Activated CD4-positive, alpha-beta T cell treated with anti-CD3 and anti-CD28 coated beads, Interleukin-2, amount 10 ng/mL, durations not matched to agents 7 days and 5 days (primary cell): ENCODE measurements at regions of chr12 and their contacts with region 1.

Region 1: DNA sequence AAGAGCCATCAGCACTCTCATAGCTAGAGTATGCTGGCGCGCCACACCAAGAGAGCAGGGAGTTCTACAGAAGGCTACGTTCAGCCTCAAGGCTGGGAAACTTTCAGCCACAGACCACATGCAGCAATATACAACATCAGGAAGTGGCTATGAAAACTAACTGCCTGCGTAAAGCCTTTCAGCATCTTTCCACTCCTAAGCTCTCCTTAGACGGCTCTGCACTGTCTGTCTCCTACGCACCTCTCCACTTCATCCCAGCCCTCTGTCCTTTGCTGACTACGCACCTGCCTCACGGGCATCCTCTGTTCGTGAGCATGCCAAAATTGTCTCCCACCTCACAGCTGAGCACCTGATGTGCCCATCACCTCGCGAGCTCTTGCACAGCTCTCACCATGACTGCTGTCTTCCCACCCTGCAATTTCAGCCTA is 9.7 kb downstream of the MPHOSPH9 start:
- DNase-seq: peak; percentile 74
- H3K4me3 Mint-ChIP-seq: peak overlapping the region; percentile 64
- H3K27ac Mint-ChIP-seq: peak overlapping the region; percentile 96
- H3K4me1 Mint-ChIP-seq: peaks cover 49% of the 10 kb centered on the region
- H3K27me3 Mint-ChIP-seq: no peaks in the 10 kb centered on the region

Region 2: GRCh38 chr12:122569288-122569687 is 654.0 kb before region 1 on chr12:
- CTCF ChIA-PET with region 1: no interaction called
- POLR2A ChIA-PET with region 1: interaction called, 14 read pairs
- DNase-seq: no peak
- H3K4me3 Mint-ChIP-seq: no peak overlapping the region
- H3K27ac Mint-ChIP-seq: no peak overlapping the region
- H3K4me1 Mint-ChIP-seq: no peaks in the 10 kb centered on the region
- H3K27me3 Mint-ChIP-seq: no peaks in the 10 kb centered on the region

Region 3: DNA sequence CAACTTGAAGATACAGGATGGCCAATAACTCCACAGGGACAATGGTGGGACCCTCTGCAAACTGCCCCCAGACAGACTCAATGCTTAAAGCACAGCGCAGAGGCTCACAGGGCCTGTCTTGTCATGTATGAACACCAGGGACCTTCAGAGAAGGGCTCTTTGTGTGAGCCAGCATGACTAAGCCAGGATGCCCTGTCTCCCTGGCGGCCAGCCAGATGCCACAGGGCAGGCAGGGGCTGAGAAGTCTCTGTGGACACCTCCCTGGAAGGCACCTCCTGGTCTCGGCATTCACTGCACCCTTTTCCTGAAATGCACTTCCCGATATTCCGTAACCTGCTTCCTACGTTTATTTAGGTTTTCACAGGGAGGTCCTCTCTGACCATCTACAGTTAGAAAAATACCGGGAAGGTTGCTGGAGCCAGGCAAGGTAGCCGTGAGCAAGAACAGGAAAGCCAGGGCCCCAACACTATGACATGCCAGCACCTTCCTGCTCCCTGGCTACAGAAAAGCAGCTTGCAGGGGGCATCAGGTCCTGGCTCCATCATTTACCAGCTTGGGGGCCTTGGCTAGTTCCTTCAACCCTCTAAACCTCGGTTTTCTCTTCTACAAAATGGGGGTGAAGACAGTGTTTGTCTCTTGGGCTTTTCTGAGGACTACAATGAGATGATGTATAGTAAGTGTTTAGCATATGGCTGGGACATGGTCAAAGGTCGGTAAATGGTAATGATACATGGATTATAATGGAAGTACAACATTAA is 137.3 kb before region 1 on chr12:
- CTCF ChIA-PET with region 1: no interaction called
- POLR2A ChIA-PET with region 1: no interaction called
- DNase-seq: no peak
- H3K4me3 Mint-ChIP-seq: no peak overlapping the region
- H3K27ac Mint-ChIP-seq: no peak overlapping the region
- H3K4me1 Mint-ChIP-seq: peaks cover 15% of the 10 kb centered on the region
- H3K27me3 Mint-ChIP-seq: no peaks in the 10 kb centered on the region

Region 4: DNA sequence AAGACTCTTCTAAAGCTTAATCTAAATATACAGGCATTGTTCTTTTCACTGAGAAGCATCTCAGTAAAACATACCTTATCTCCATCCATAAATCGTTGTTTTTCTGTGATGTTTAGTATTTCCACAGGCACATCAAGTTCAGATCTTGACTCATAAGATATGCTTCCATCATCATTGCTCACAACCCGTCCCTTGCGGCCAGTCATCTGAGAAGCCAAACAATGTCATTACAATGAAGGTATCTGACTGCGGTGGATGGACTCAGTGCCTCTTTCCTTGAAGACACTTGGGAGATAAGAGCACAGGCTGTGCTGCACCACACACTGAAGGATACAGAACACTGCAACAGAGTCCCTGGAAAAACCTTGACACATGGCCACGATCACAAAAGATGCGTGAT is 96.6 kb after region 1 on chr12:
- CTCF ChIA-PET with region 1: no interaction called
- POLR2A ChIA-PET with region 1: no interaction called
- DNase-seq: no peak
- H3K4me3 Mint-ChIP-seq: no peak overlapping the region
- H3K27ac Mint-ChIP-seq: no peak overlapping the region
- H3K4me1 Mint-ChIP-seq: no peaks in the 10 kb centered on the region
- H3K27me3 Mint-ChIP-seq: no peaks in the 10 kb centered on the region